ENCODE measurements at regions of chr5 and their contacts with region 1.

Region 1: GRCh38 chr5:134411546-134412266 is at the start of gene CDKN2AIPNL:
- DNase-seq: peak; percentile 88 to 94 (median 90)
- H3K4me3 ChIP-seq: peak within 1 kb of the TSS; percentile 93
- H3K27ac ChIP-seq: peak within 1 kb of the TSS in 1 of 2 donors; percentile 9
- H3K4me1 ChIP-seq: peaks cover 5% of the 10 kb centered on the region
- H3K27me3 ChIP-seq: no peaks in the 10 kb centered on the region
- CTCF ChIP-seq: peak; percentile 69 to 88 (median 85)
- EP300 ChIP-seq: no peak
- POLR2A ChIP-seq: peak; percentile 40
- total RNA-seq, gene CDKN2AIPNL: 12.2 to 18.0 (median 15.3) TPM

Region 2: DNA sequence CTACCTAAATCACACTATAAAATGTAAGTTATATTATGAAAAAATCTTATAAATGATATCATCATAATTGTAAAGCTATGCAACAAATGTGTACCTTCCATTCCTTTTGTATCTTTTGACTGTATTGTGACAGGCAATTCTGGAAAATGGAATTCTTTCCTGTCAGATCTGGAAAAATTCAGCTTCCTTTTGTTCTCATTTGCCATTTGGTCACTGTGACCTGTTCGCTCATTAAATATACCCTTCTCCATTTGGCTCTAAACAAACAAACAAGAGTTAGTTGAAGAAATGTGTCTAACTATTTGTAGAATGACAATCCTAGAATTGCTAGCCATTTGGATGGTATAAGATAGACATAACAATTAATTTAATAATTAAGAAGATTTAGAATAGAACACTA is 107.4 kb before region 1 on chr5:
- intact Hi-C with region 1: no loop called
- DNase-seq: no peak
- H3K4me3 ChIP-seq: no peak overlapping the region
- H3K27ac ChIP-seq: no peak overlapping the region
- H3K4me1 ChIP-seq: peaks cover 1% of the 10 kb centered on the region
- H3K27me3 ChIP-seq: no peaks in the 10 kb centered on the region
- CTCF ChIP-seq: no peak
- EP300 ChIP-seq: no peak
- POLR2A ChIP-seq: no peak

Region 3: DNA sequence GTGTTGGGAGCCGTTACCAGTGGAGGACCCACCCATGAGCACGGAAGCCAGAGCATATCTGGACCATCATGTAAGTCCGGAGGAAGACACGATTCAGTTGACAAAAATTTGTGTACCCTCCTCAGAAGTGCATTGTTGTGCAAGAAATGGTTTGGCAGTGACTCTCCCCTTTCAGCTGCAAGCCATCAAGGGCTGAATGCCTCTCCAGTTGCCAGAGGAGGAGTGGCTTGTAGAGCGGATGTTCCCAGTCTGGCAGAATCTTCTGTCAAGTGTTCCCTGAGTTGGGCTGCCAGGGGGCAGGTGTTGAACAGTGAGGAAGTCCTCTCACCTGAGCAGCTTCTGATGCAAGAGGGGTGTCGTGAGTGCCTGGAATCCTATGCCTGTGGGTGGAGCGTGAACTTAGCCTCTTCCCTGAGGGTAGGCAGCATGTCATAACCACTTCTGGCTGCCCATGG is 27.5 kb after region 1 on chr5:
- intact Hi-C with region 1: loop called in 1 of 4 experiments (anchors 2 kb)
- DNase-seq: peak; percentile 82 to 91 (median 84)
- H3K4me3 ChIP-seq: no peak overlapping the region
- H3K27ac ChIP-seq: peak overlapping the region in 1 of 2 donors; percentile 39
- H3K4me1 ChIP-seq: peaks cover 12% of the 10 kb centered on the region
- H3K27me3 ChIP-seq: no peaks in the 10 kb centered on the region
- CTCF ChIP-seq: no peak
- EP300 ChIP-seq: no peak
- POLR2A ChIP-seq: no peak

Region 4: GRCh38 chr5:134465816-134466240 is 54.1 kb after region 1 on chr5:
- intact Hi-C with region 1: loop called in 1 of 4 experiments (anchors 2 kb)
- DNase-seq: peak; percentile 88 to 95 (median 91)
- H3K4me3 ChIP-seq: peak overlapping the region; percentile 59
- H3K27ac ChIP-seq: peak overlapping the region; percentile 18 to 81
- H3K4me1 ChIP-seq: peaks cover 13% of the 10 kb centered on the region
- H3K27me3 ChIP-seq: no peaks in the 10 kb centered on the region
- CTCF ChIP-seq: peak in 1 of 3 donors; percentile 26
- EP300 ChIP-seq: no peak
- POLR2A ChIP-seq: peak; percentile 67

Region 5: DNA sequence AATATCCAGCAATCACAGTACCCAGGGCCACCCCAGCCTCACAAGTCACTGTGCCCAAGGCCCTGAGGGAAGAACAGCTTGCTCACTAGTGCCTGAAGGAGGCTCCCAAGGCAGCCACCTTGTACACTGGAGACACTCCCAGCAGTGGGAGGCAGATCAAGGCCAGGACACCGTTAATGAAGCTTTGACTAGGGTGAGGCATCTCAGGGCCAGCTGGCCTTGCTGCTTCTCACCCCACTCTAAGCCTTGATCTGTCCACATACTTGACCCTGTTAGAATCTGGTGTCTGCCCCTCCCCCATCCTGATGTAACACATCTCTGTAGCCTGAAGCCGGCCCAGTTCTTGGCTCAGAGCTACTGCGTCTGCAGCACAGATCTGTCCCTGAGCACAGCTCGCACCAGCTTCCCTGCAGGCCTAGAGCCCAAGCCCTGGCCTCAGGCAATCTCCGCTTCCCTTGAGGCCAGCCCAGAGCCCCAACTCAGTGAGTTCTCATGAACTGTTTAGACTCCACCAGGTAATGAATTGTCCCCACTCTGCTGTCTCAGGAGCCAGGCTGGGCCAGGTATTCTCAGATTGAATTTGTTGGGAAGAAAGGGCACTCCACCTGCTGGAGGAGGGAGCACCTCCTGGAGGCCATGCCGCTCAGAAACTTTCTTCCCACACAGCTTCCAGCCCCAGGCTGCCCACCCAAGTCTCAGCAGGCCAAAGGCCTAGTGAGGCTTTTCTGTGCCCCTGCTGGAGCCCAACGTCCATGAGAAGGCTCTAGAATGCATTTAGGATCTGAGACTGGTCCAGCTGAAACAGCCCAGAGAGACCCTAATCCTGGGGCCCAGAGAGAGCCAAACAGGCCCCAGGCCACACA is 100.3 kb after region 1 on chr5:
- intact Hi-C with region 1: no loop called
- DNase-seq: peak; percentile 83 to 97 (median 90)
- H3K4me3 ChIP-seq: no peak overlapping the region
- H3K27ac ChIP-seq: peak overlapping the region in 1 of 2 donors; percentile 53
- H3K4me1 ChIP-seq: peaks cover 15% of the 10 kb centered on the region
- H3K27me3 ChIP-seq: no peaks in the 10 kb centered on the region
- CTCF ChIP-seq: peak in 1 of 3 donors; percentile 14
- EP300 ChIP-seq: no peak
- POLR2A ChIP-seq: no peak

Region 6: DNA sequence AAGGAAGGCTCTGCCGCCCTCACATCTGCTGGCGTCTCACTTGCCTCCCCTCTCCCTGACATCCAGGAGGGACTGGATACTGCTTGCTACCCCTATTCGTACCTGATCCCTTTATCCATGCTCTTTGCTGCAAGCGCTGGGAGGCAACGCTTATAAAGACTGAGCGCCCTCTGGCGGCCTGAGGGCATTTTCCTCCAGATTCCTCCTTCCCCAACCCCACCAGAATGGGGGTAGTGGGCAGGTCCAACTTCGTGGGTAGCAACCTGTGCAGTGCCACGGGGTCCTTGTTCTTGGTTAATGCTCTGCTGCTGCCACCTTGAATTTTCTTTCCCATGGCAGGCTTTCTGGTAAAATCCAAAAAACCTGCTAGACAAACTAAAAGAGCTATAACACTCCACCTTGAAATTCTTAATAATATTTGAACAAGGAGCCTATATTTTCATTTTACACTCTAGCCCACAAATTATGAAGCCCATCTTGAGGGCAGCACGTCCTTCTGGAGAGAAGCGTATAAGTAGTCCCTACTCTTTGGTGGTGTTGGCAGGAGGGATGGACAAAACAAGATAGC is 166.2 kb after region 1 on chr5:
- intact Hi-C with region 1: loop called in 3 of 4 experiments (anchors 5 to 10 kb)
- DNase-seq: peak; percentile 73 to 89 (median 84)
- H3K4me3 ChIP-seq: no peak overlapping the region
- H3K27ac ChIP-seq: no peak overlapping the region
- H3K4me1 ChIP-seq: no peaks in the 10 kb centered on the region
- H3K27me3 ChIP-seq: no peaks in the 10 kb centered on the region
- CTCF ChIP-seq: peak; percentile 59 to 77 (median 70)
- EP300 ChIP-seq: no peak
- POLR2A ChIP-seq: no peak

Measured in ovary (tissue), 10 donors.